Activated T-helper 1 cell treated with anti-CD3 and anti-CD28 coated beads, Interleukin-12 subunit alpha, Interleukin-12 subunit beta, Interleukin-2, Interleukin-4 antibody, amounts not matched to agents 30 ng/mL and 10 ng/mL and 1 ng/mL, durations not matched to agents 14 hours and 24 hours and 36 hours (primary cell): ENCODE measurements at regions of chr22 and their contacts with region 1.

Region 1: GRCh38 chr22:35648066-35649025 is at the start of gene APOL6:
- DNase-seq: peak; percentile 71
- H3K4me3 Mint-ChIP-seq: peak within 1 kb of the TSS; percentile 100
- H3K27ac Mint-ChIP-seq: peak within 1 kb of the TSS; percentile 100
- H3K4me1 Mint-ChIP-seq: peaks cover 45% of the 10 kb centered on the region
- H3K27me3 Mint-ChIP-seq: no peaks in the 10 kb centered on the region
- total RNA-seq, gene APOL6: 27.3 and 27.7 TPM in 2 replicates

Region 2: DNA sequence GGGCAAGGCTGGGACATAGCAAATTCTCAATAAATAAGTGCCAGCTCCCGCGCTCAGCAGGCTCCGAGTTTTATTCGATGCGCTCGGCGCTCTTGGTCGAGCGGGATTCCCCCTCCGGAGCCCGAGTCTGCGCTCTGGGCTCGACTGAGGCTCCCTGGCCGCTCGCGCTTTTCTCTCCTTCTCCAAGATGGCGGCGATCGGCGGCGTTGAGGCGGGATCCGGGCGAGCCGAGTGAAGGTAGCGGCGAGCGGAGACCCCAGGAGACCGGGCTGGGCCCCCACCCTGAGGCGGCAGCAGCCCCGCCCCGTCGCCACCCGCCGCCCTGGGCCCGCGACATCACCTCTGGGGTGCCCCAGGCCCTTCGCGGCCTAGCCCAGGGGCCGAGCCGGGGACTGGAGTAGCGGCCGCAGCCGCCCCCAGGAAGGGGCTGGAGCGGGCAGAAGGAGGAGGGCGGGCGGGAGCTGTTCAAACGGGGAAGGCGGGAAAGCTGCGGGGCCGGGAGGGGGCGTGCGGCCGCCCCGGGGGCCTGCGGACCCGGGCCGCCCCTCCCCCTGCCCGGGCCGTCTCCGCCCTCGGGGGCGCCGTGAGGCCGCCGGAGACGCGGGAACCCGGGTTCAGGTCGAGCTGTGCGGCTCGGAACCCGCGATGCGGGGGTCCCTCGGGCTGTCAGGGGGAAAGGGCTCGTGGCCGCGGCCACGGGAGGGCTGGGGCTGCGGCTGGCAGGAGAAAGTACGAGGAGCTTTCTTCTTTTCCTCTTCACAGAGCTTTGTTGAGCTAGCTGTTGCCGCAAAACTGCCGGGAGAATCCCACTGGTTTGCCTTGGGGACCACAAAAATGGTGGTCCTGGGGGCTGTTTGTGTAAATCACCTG is 390.8 kb before region 1 on chr22 and contains the start of gene HMGXB4:
- intact Hi-C with region 1: loop called (anchors 1 kb)
- DNase-seq: peak; percentile 82
- H3K4me3 Mint-ChIP-seq: peak within 1 kb of the TSS; percentile 91
- H3K27ac Mint-ChIP-seq: peak within 1 kb of the TSS; percentile 94
- H3K4me1 Mint-ChIP-seq: peaks cover 26% of the 10 kb centered on the region
- H3K27me3 Mint-ChIP-seq: no peaks in the 10 kb centered on the region
- total RNA-seq, gene HMGXB4: 45.7 and 47.9 TPM in 2 replicates

Region 3: GRCh38 chr22:35552196-35552842 is 96.0 kb before region 1 on chr22:
- intact Hi-C with region 1: loop called (anchors 1 kb)
- DNase-seq: peak; percentile 78
- H3K4me3 Mint-ChIP-seq: no peak overlapping the region
- H3K27ac Mint-ChIP-seq: peak overlapping the region; percentile 37
- H3K4me1 Mint-ChIP-seq: peaks cover 14% of the 10 kb centered on the region
- H3K27me3 Mint-ChIP-seq: peaks cover 3% of the 10 kb centered on the region

Region 4: DNA sequence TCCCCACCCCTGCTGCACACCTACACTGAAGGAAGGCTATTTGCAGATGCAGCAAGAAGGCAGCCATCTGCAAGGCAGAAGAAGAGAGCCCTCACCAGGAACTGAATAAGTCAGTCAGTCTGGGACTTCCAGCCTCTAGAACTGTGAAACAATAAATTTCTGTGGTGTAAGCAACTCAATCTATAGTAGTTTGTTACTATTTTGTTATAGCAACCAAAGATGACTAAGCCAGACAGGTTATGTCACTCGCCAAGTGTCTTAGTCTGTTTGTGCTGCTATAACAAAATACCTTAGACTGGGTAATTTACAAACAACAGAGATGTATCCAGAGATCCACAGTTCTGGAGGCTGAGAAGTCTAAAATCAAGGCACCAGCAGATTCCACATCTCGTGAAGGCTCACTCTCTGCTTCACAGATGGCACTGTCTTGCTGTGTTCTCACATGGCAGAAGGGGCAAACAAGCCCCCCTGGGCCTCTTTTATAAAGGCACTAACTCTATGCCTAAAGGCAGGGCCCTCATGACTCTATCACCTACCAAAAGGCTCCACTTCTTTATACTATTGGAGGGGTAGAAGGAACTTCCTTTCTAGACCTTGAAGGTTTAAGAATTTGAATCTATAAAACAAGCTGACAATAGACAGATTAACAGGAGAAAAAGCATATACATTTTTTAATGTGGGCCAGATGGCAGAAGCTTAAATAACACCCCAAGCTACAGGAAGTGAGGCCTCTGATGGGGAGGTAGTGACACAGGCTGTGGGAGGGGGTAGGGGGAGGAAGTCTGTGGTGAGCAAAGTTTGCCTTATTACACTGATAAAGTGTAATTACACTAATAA is 12.2 kb after region 1 on chr22:
- intact Hi-C with region 1: loop called (anchors 1 kb)
- DNase-seq: no peak
- H3K4me3 Mint-ChIP-seq: peak overlapping the region; percentile 42
- H3K27ac Mint-ChIP-seq: peak overlapping the region; percentile 86
- H3K4me1 Mint-ChIP-seq: peaks cover 68% of the 10 kb centered on the region
- H3K27me3 Mint-ChIP-seq: no peaks in the 10 kb centered on the region

Region 5: GRCh38 chr22:35678836-35679235 is 30.5 kb after region 1 on chr22:
- intact Hi-C with region 1: loop called (anchors 1 kb)
- DNase-seq: no peak
- H3K4me3 Mint-ChIP-seq: no peak overlapping the region
- H3K27ac Mint-ChIP-seq: peak overlapping the region; percentile 45
- H3K4me1 Mint-ChIP-seq: peaks cover 16% of the 10 kb centered on the region
- H3K27me3 Mint-ChIP-seq: peaks cover 3% of the 10 kb centered on the region

Region 6: GRCh38 chr22:35697142-35697541 is 48.8 kb after region 1 on chr22:
- intact Hi-C with region 1: loop called (anchors 2 kb)
- DNase-seq: peak; percentile 40
- H3K4me3 Mint-ChIP-seq: no peak overlapping the region
- H3K27ac Mint-ChIP-seq: no peak overlapping the region
- H3K4me1 Mint-ChIP-seq: no peaks in the 10 kb centered on the region
- H3K27me3 Mint-ChIP-seq: no peaks in the 10 kb centered on the region